Endothelial cell of umbilical vein (primary cell): ENCODE measurements at regions of chr12 and their contacts with region 1.

Region 1: GRCh38 chr12:95217377-95218149 is at the starts of genes FGD6 and VEZT:
- DNase-seq: peak; percentile 100
- H3K4me3 ChIP-seq: peak within 1 kb of the TSS; percentile 81 to 99 (median 94)
- H3K27ac ChIP-seq: peak within 1 kb of the TSS; percentile 88
- H3K4me1 ChIP-seq: peaks cover 37% of the 10 kb centered on the region
- H3K27me3 ChIP-seq: no peaks in the 10 kb centered on the region
- CTCF ChIP-seq: peak; percentile 61 to 70
- POLR2A ChIP-seq: peak; percentile 86
- total RNA-seq, gene FGD6: 14.0 and 17.8 TPM in 2 replicates
- total RNA-seq, gene VEZT: 85.2 and 91.3 TPM in 2 replicates

Region 2: GRCh38 chr12:94710933-94711332 is 506.6 kb before region 1 on chr12:
- CTCF ChIA-PET with region 1: no interaction called
- POLR2A ChIA-PET with region 1: no interaction called
- dilution Hi-C with region 1: no loop called
- intact Hi-C with region 1: loop called (anchors 10 kb)
- DNase-seq: peak; percentile 29
- H3K4me3 ChIP-seq: no peak overlapping the region
- H3K27ac ChIP-seq: no peak overlapping the region
- H3K4me1 ChIP-seq: peaks cover 14% of the 10 kb centered on the region
- H3K27me3 ChIP-seq: no peaks in the 10 kb centered on the region
- CTCF ChIP-seq: peak; percentile 44 to 47
- POLR2A ChIP-seq: no peak

Region 3: GRCh38 chr12:95054206-95054605 is 163.4 kb before region 1 on chr12:
- CTCF ChIA-PET with region 1: no interaction called
- POLR2A ChIA-PET with region 1: no interaction called
- dilution Hi-C with region 1: no loop called
- intact Hi-C with region 1: no loop called
- DNase-seq: no peak
- H3K4me3 ChIP-seq: no peak overlapping the region
- H3K27ac ChIP-seq: no peak overlapping the region
- H3K4me1 ChIP-seq: no peaks in the 10 kb centered on the region
- H3K27me3 ChIP-seq: no peaks in the 10 kb centered on the region
- CTCF ChIP-seq: no peak
- POLR2A ChIP-seq: no peak

Region 4: GRCh38 chr12:95117178-95117599 is 100.4 kb before region 1 on chr12:
- CTCF ChIA-PET with region 1: interaction called, 91 read pairs
- POLR2A ChIA-PET with region 1: interaction called, 3 read pairs
- dilution Hi-C with region 1: loop called (anchors 25 kb)
- intact Hi-C with region 1: loop called (anchors 1 kb)
- DNase-seq: peak; percentile 85
- H3K4me3 ChIP-seq: no peak overlapping the region
- H3K27ac ChIP-seq: peak overlapping the region; percentile 88
- H3K4me1 ChIP-seq: peaks cover 25% of the 10 kb centered on the region
- H3K27me3 ChIP-seq: no peaks in the 10 kb centered on the region
- CTCF ChIP-seq: peak; percentile 42 to 45
- POLR2A ChIP-seq: no peak

Region 5: DNA sequence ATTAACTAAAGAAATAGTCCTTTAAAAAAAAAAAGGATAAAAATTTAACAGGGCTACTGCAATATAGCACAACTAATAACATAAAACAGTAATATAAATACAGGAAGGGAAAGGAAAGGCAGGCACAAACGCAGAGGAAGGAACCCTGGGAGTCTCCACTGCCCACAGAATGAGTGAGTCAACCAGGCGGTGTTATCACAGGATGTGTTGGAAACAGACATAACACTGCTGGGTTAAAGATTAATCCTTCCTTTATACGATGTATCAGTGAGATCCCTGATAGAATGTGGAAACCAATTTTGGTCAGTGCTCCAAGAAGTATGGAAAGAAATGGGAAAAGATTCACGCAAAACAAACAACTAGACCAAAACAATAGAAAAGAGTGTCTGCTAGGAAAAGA is 48.2 kb before region 1 on chr12:
- CTCF ChIA-PET with region 1: interaction called, 17 read pairs
- POLR2A ChIA-PET with region 1: interaction called, 3 read pairs
- dilution Hi-C with region 1: no loop called
- intact Hi-C with region 1: loop called (anchors 1 kb)
- DNase-seq: peak; percentile 96
- H3K4me3 ChIP-seq: peak overlapping the region in 1 of 3 experiments; percentile 11
- H3K27ac ChIP-seq: peak overlapping the region; percentile 90
- H3K4me1 ChIP-seq: peaks cover 45% of the 10 kb centered on the region
- H3K27me3 ChIP-seq: no peaks in the 10 kb centered on the region
- CTCF ChIP-seq: no peak
- POLR2A ChIP-seq: peak; percentile 48

Region 6: DNA sequence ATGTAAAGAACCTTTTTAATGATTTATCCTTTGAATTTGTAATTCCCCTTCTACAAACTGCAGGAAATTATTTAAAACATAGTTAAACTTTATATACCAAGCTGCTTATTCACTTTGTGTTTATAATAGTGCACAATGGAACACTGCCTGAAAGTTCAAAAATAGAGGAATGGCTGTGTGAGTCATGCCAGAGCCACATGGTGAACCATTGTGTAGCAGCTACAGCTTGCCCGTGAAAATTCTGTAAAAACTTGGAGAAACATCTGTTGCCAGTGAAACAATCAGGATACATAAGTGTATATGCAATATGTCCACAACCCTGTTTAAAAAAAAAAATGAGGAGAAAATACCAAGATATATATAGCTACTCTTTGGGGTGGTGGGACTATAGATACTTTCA is 59.6 kb after region 1 on chr12:
- CTCF ChIA-PET with region 1: interaction called, 5 read pairs
- POLR2A ChIA-PET with region 1: no interaction called
- dilution Hi-C with region 1: no loop called
- intact Hi-C with region 1: loop called (anchors 1 kb)
- DNase-seq: peak; percentile 96
- H3K4me3 ChIP-seq: no peak overlapping the region
- H3K27ac ChIP-seq: peak overlapping the region; percentile 56
- H3K4me1 ChIP-seq: peaks cover 17% of the 10 kb centered on the region
- H3K27me3 ChIP-seq: no peaks in the 10 kb centered on the region
- CTCF ChIP-seq: no peak
- POLR2A ChIP-seq: no peak

Region 7: DNA sequence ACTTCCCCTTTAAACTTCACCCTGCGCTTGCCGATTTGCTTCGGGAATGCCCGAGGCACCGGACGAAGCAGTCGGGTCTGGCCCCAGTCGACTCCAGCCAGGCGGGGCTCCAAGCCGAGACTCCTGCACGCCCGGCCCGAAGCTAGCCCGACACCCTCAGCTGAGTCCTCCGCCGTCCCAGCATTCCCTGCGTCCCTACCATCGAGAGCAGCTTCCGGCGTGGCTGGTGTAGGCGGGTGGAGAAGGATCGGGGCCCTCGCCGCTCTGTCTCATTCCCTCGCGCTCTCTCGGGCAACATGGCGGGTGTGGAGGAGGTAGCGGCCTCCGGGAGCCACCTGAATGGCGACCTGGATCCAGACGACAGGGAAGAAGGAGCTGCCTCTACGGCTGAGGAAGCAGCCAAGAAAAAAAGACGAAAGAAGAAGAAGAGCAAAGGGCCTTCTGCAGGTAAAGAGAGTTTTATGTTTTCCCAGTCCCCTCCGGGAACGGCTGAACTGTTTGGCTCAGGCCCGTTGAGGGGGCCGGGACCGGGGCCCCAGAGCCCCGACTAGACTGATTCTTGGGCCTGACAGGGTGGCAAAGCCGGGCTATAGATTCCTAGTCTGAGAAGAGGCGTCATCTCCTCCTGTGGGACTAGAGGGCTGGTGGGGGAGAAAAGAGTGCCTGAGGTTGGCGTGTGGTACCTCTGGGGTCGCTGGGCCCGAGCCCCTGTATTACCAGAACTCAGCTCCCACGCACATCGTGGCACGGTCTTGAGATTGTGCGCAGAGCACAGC is 256.5 kb after region 1 on chr12 and contains the start of gene METAP2:
- CTCF ChIA-PET with region 1: no interaction called
- POLR2A ChIA-PET with region 1: interaction called, 7 read pairs
- dilution Hi-C with region 1: no loop called
- intact Hi-C with region 1: loop called (anchors 2 kb)
- DNase-seq: peak; percentile 97
- H3K4me3 ChIP-seq: peak within 1 kb of the TSS; percentile 62 to 82 (median 78)
- H3K27ac ChIP-seq: peak within 1 kb of the TSS; percentile 87
- H3K4me1 ChIP-seq: peaks cover 18% of the 10 kb centered on the region
- H3K27me3 ChIP-seq: no peaks in the 10 kb centered on the region
- CTCF ChIP-seq: no peak
- POLR2A ChIP-seq: peak; percentile 85
- total RNA-seq, gene METAP2: 89.1 and 105 TPM in 2 replicates